ENCODE measurements at regions of chr16 and their contacts with region 1.

Region 1: GRCh38 chr16:75198135-75198600 is 8.8 kb downstream of the CTRB2 start:
- DNase-seq: no peak
- ATAC-seq: no peak

Region 2: GRCh38 chr16:75402821-75403475 is 204.8 kb after region 1 on chr16:
- intact Hi-C with region 1: loop called in 1 of 2 experiments (anchors 10 kb)
- DNase-seq: no peak
- ATAC-seq: peak; percentile 31